Activated B cell treated with CpG ODN at 0.5 μM for 24 hours (primary cell): ENCODE measurements at regions of chrX and their contacts with region 1.

Region 1: DNA sequence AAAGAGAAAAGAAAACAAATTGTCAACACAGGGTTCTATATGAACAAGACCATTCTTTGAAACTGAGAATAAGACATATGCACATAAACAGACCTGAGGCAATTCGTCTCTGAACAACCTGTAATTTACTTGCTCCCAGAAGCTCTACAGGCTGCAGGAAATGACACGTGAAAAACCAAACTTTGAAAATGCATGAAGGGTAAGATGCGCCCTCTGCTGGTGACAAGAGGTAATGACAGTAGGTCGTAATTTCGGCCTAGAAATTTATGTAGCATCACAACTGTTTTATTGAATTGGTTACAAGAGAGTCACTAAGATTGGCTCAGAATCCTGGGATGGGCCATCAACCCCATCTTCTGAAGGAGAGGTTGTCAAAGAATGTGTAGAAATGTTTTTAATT is 276.5 kb downstream of the PPP4R3C start:
- DNase-seq: no peak
- ATAC-seq: no peak
- H3K4me3 Mint-ChIP-seq: no peak overlapping the region
- H3K27ac Mint-ChIP-seq: no peak overlapping the region
- H3K4me1 Mint-ChIP-seq: no peaks in the 10 kb centered on the region
- H3K27me3 Mint-ChIP-seq: no peaks in the 10 kb centered on the region
- CTCF ChIP-seq: peak; percentile 26

Region 2: DNA sequence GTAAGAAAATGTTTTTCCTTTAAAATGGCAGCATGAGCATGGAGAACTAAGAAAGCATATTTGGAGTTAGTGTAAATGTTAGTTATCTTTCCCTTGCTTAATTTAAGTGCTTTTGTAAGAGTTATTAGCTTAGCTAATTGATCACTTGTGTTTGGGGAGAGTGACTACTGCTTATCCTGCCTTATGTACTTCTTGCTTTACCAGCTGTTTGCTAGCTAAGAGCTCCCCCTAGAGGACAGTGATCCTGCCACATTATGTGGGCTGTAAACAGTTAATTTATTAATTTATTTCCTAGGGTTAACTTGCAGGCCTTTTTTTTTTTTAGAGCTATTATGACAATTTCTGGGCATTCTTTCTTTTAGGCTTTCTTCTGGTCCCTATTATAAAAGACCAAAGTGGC is 534.9 kb before region 1 on chrX:
- CTCF ChIA-PET with region 1: no interaction called
- POLR2A ChIA-PET with region 1: no interaction called
- intact Hi-C with region 1: loop called (anchors 10 kb)
- DNase-seq: no peak
- ATAC-seq: no peak
- H3K4me3 Mint-ChIP-seq: no peak overlapping the region
- H3K27ac Mint-ChIP-seq: no peak overlapping the region
- H3K4me1 Mint-ChIP-seq: no peaks in the 10 kb centered on the region
- H3K27me3 Mint-ChIP-seq: no peaks in the 10 kb centered on the region
- CTCF ChIP-seq: no peak

Region 3: DNA sequence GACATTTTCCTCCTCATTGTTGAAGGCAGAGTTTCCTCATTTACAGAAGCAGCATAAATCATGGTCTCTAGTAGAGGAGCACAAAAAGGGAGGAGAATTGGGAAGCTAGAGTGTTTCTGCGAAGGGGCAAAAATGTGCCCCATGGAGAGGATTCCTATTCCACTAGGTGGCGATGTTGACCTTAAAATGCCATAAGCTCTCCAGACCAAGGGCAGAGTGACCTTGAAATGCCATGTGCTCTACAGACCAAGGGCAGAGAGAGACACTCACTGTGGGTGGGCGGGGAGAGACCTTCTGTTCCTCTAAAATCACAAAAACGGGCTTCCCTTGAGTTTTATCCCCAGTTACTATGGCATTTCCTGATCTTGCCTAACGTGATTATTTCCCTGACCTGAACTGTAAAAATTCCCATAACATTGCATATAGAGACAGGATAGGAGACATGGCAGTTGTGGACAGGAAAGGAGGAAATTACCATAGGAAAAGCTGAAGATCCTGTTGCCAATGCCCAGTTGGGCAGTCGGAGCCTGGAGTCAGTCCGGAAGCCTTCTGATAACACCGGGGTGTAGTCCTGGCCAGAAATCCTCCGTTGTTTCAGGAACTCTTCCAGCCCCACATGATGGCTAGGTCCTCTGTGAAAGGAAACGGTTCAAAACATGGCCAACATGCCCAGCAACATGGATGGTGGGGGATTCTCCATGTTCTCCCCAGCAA is 403.0 kb before region 1 on chrX:
- CTCF ChIA-PET with region 1: no interaction called
- POLR2A ChIA-PET with region 1: no interaction called
- intact Hi-C with region 1: loop called (anchors 5 kb)
- DNase-seq: no peak
- ATAC-seq: no peak
- H3K4me3 Mint-ChIP-seq: no peak overlapping the region
- H3K27ac Mint-ChIP-seq: no peak overlapping the region
- H3K4me1 Mint-ChIP-seq: no peaks in the 10 kb centered on the region
- H3K27me3 Mint-ChIP-seq: no peaks in the 10 kb centered on the region
- CTCF ChIP-seq: no peak